ENCODE measurements at regions of chr10 and their contacts with region 1.

Region 1: DNA sequence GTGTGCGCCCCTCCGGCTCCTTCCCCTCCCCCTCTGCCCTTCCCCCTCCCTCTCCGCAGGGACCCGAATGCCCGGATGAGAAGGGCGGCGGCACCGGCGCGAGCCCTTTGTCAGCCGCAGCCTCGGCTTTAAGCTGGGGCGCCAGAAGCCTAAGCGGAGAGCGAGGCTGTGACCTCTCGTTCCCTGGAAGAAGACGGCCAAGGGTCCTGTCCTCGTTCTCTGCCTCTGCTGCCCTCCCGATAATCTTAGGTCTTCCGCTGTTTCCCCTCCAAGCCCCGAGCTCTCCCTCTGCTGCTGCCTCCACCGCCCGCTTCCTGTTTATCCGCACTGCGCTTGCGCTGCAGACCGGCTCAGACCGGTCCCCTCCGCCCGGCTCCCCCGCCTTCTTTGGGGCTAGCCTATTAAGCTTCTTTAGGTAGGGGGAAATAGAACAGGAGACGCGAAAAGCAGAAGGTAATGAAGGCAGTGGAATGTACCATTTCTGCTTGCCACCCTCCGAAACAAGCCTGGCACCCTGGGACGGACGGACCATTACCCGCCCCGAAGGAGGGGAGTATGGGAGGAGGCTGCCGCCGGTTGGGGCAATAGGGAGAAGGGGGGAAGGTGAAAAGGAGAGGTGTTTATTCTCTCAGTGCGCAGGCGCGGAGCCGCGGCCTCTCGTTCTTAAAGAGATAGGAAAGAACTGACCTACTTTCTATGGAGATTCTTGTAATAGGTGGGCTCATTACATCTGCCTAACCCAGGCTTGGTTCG is at the start of gene OGA:
- DNase-seq: peak; percentile 98
- ATAC-seq: peak; percentile 87
- H3K4me3 ChIP-seq: peak within 1 kb of the TSS; percentile 56 to 97 (median 92)
- H3K4me3 Mint-ChIP-seq: peak within 1 kb of the TSS; percentile 94
- H3K27ac ChIP-seq: peak within 1 kb of the TSS; percentile 81 to 85
- H3K27ac Mint-ChIP-seq: peak within 1 kb of the TSS; percentile 99
- H3K4me1 ChIP-seq: peaks cover 27% of the 10 kb centered on the region in 2 donors
- H3K4me1 Mint-ChIP-seq: peaks cover 35% of the 10 kb centered on the region
- H3K27me3 ChIP-seq: no peaks in the 10 kb centered on the region
- H3K27me3 Mint-ChIP-seq: no peaks in the 10 kb centered on the region
- CTCF ChIP-seq: no peak
- total RNA-seq, gene OGA: 418 and 442 TPM in 2 replicates

Region 2: DNA sequence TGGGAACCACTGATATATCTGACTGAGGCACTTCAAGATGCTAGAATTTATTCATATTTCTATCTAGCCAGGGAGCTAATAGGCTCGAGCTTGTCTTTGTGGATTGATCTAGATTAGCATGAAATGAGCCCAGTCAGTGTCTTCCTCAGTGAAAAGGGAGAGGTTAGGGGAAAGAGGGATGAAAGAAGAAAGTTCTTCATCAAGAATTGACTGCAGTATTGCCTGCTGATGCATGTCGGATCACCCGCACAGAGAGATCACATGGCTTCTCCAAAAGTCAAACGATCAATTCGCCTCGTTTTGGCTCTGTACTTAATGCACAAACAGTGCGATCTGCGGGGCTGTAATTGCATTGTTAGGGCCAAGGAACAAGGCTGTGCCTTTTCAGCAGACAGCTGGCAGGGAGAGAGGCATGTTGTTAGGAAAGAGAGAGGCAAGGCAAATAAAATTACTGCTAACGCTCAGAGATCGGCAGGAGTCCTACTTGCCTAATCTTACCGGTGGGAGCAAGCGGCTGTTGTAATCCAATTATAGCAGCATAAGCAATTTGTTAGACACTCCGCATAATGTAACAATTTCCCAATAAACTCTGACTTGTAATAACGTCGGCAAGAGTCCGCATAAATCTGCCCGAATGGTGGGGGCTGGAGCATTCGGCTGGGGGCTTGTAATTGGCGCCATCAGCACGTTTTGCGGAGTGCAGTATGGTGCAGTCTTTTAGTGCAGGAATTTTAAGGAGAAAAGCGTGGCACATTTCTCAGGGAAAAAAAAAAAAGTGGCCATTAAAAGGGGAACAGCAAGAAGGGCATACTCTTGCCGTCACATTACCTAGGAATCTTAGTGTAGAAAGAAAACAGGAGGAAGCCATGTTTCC is 332.4 kb before region 1 on chr10:
- CTCF ChIA-PET with region 1: no interaction called
- POLR2A ChIA-PET with region 1: no interaction called
- intact Hi-C with region 1: no loop called
- DNase-seq: no peak
- ATAC-seq: no peak
- H3K4me3 ChIP-seq: no peak overlapping the region
- H3K4me3 Mint-ChIP-seq: no peak overlapping the region
- H3K27ac ChIP-seq: no peak overlapping the region
- H3K27ac Mint-ChIP-seq: no peak overlapping the region
- H3K4me1 ChIP-seq: no peaks in the 10 kb centered on the region
- H3K4me1 Mint-ChIP-seq: no peaks in the 10 kb centered on the region
- H3K27me3 ChIP-seq: no peaks in the 10 kb centered on the region
- H3K27me3 Mint-ChIP-seq: no peaks in the 10 kb centered on the region
- CTCF ChIP-seq: no peak

Region 3: DNA sequence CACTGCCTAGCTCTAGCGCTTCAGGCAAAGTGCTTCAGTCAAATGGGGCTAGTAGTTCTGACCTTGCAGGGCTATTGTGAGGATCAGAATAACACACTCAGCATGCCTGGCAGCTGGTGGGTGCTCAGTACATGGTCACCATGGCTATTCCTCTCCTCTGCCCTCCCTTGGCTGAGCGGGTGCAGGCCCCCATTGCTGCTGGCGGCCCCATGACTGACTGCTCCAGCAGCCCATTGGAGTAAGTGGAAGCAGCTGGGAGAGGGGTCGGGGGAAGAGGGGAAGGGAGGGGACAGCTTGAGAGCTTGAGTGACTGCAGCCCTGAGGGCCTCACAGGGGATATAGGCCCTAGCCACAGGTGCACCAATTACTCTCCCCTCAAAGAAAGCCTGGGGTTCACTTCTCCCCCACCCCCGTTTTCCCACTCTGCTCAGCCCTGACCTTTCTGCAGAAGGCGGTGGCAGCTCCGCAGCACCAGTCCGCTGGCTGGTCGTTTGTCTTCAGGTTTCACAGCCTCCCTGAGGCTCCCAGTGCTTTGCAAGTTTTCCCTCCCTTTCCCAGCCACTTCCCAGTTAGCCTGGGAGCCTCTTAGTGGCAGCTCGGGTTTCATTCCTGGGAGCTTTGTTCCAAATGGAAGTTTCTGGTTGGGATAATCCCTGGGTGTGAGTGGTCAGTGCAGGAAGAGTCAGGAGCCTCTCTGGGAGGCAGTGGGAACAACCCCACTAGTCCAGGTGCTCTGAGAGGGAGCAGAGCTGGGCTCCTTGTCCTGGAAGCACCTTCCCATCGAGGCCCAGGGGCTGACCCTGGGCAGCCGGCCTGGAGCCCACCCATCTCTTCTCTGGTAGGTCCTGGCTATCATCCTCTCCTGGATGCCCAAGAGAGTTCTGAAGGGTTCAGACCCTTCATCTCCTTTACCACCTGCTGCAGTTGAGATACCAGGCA is 58.7 kb before region 1 on chr10:
- CTCF ChIA-PET with region 1: no interaction called
- POLR2A ChIA-PET with region 1: no interaction called
- intact Hi-C with region 1: no loop called
- DNase-seq: no peak
- ATAC-seq: no peak
- H3K4me3 ChIP-seq: no peak overlapping the region
- H3K4me3 Mint-ChIP-seq: no peak overlapping the region
- H3K27ac ChIP-seq: no peak overlapping the region
- H3K27ac Mint-ChIP-seq: no peak overlapping the region
- H3K4me1 ChIP-seq: no peaks in the 10 kb centered on the region
- H3K4me1 Mint-ChIP-seq: no peaks in the 10 kb centered on the region
- H3K27me3 ChIP-seq: no peaks in the 10 kb centered on the region
- H3K27me3 Mint-ChIP-seq: peaks cover 27% of the 10 kb centered on the region
- CTCF ChIP-seq: no peak

Region 4: GRCh38 chr10:101830322-101831168 is 12.2 kb after region 1 on chr10:
- CTCF ChIA-PET with region 1: interaction called, 45 read pairs
- POLR2A ChIA-PET with region 1: interaction called, 102 read pairs
- intact Hi-C with region 1: loop called (anchors 1 kb)
- DNase-seq: peak; percentile 99
- ATAC-seq: peak; percentile 73
- H3K4me3 ChIP-seq: peak overlapping the region; percentile 3 to 72 (median 58)
- H3K4me3 Mint-ChIP-seq: peak overlapping the region; percentile 94
- H3K27ac ChIP-seq: peak overlapping the region; percentile 89 to 96
- H3K27ac Mint-ChIP-seq: peak overlapping the region; percentile 99
- H3K4me1 ChIP-seq: peaks cover 35 to 58% of the 10 kb centered on the region in 2 donors
- H3K4me1 Mint-ChIP-seq: peaks cover 45% of the 10 kb centered on the region
- H3K27me3 ChIP-seq: no peaks in the 10 kb centered on the region
- H3K27me3 Mint-ChIP-seq: no peaks in the 10 kb centered on the region
- CTCF ChIP-seq: no peak

Region 5: DNA sequence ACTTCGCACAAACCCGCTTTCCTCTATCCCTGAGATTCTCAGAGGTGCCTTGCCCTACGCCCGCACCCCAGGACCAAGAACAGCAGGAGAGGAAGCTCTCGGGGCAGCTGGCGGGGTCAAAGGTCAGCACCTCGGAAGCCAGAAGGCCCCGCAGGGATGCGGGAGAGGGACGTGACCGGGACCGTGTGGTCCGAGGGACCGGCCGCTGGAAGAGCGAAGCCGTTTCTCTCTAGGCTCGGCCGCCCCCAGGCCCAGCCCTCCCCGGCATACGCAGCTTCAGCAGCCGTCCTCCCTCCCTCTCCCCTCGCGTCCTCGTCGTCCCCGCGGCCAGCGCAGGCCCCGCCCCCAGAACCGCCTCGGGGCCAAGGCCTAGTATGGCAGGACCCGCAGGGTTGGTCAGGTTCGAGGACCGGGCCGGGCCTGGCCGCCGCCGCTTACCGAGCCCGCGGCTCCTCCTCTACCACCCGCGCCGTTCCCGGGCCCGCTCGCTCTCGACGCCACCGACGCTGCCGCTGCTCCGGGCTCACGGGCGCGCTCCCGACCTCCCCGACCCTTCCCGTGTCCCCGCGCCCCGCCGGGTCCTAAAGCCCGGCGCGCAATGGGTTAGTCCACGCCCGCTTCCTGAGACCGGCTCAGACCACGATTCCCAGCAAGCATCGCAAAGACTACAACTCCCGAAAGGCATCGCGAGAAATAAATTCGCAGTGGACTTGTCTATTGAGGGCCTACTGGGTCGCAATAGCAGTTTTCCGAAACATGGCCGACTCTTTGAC is 237.5 kb after region 1 on chr10 and contains the start of gene ARMH3:
- CTCF ChIA-PET with region 1: interaction called, 3 read pairs
- POLR2A ChIA-PET with region 1: interaction called, 4 read pairs
- intact Hi-C with region 1: loop called (anchors 2 kb)
- DNase-seq: peak; percentile 94
- ATAC-seq: peak; percentile 91
- H3K4me3 ChIP-seq: peak within 1 kb of the TSS; percentile 76 to 99 (median 93)
- H3K4me3 Mint-ChIP-seq: peak within 1 kb of the TSS; percentile 99
- H3K27ac ChIP-seq: peak within 1 kb of the TSS; percentile 75 to 80
- H3K27ac Mint-ChIP-seq: peak within 1 kb of the TSS; percentile 98
- H3K4me1 ChIP-seq: peaks cover 15 to 26% of the 10 kb centered on the region in 2 donors
- H3K4me1 Mint-ChIP-seq: peaks cover 36% of the 10 kb centered on the region
- H3K27me3 ChIP-seq: no peaks in the 10 kb centered on the region
- H3K27me3 Mint-ChIP-seq: no peaks in the 10 kb centered on the region
- CTCF ChIP-seq: no peak
- total RNA-seq, gene ARMH3: 36.2 and 40.7 TPM in 2 replicates

Region 6: DNA sequence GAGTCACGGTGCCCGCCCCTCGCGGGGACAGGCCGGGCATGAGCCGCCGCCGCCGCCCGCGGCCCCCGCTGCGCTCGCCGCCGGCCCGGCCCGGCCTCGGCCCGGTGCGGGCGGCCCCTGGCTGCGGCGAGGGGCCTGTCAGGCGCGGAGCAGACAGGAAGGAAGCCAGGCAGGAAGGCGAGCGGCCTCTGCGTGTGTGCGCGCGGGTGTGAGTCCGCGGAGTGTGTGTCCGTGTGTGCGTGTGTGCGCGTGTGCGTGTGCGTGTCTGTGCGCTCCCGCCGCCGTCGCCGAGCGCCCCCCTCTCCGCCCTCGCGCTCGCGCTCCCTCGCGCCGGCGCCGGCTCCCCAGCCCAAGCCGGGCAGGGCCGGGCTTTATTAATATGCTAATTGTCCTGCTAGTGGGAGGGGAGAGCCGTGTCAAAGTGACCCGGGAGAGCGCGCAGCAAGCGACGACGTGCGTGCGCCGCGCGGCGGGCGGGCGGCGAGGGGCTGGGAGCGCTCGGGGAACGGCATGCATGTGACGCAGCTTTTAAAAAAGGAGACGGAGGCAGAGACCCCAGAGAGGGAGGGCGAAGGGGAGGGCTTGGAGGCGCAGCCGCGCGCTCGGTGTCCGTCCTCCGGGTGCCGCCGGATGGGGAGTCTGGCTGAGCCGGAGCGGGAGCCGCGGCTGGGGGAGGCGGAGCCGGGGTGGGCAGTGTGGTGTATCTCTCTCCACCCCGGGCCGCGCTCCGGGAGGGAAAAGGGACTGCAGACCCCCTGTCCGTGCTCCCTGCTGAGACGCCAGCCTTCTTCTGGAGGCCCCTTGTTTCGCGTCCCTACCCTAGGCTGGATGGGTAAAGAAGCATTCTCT is 302.1 kb after region 1 on chr10 and contains the start of gene LDB1:
- CTCF ChIA-PET with region 1: no interaction called
- POLR2A ChIA-PET with region 1: interaction called, 4 read pairs
- intact Hi-C with region 1: loop called (anchors 2 kb)
- DNase-seq: peak; percentile 89
- ATAC-seq: peak; percentile 61
- H3K4me3 ChIP-seq: peak within 1 kb of the TSS; percentile 71 to 95 (median 90)
- H3K4me3 Mint-ChIP-seq: peak within 1 kb of the TSS; percentile 97
- H3K27ac ChIP-seq: peak within 1 kb of the TSS; percentile 87 to 94
- H3K27ac Mint-ChIP-seq: peak within 1 kb of the TSS; percentile 99
- H3K4me1 ChIP-seq: peaks cover 45 to 55% of the 10 kb centered on the region in 2 donors
- H3K4me1 Mint-ChIP-seq: peaks cover 55% of the 10 kb centered on the region
- H3K27me3 ChIP-seq: no peaks in the 10 kb centered on the region
- H3K27me3 Mint-ChIP-seq: no peaks in the 10 kb centered on the region
- CTCF ChIP-seq: no peak
- total RNA-seq, gene LDB1: 111 and 114 TPM in 2 replicates

Region 7: GRCh38 chr10:102245101-102245931 is 427.0 kb after region 1 on chr10 and contains the start of gene GBF1:
- CTCF ChIA-PET with region 1: no interaction called
- POLR2A ChIA-PET with region 1: no interaction called
- intact Hi-C with region 1: loop called (anchors 5 kb)
- DNase-seq: peak; percentile 98
- ATAC-seq: peak; percentile 86
- H3K4me3 ChIP-seq: peak within 1 kb of the TSS; percentile 80 to 99 (median 98)
- H3K4me3 Mint-ChIP-seq: peak within 1 kb of the TSS; percentile 94
- H3K27ac ChIP-seq: peak within 1 kb of the TSS; percentile 86 to 90
- H3K27ac Mint-ChIP-seq: peak within 1 kb of the TSS; percentile 38
- H3K4me1 ChIP-seq: peaks cover 50 to 51% of the 10 kb centered on the region in 2 donors
- H3K4me1 Mint-ChIP-seq: peaks cover 56% of the 10 kb centered on the region
- H3K27me3 ChIP-seq: peaks cover 0 to 31% (median 27%) of the 10 kb centered on the region in 4 experiments
- H3K27me3 Mint-ChIP-seq: peaks cover 23% of the 10 kb centered on the region
- CTCF ChIP-seq: no peak
- total RNA-seq, gene GBF1: 39.3 and 41.2 TPM in 2 replicates

Measured in B cell (primary cell).